Activated T-helper 1 cell treated with anti-CD3 and anti-CD28 coated beads, Interleukin-12 subunit alpha, Interleukin-12 subunit beta, Interleukin-2, Interleukin-4 antibody, amounts not matched to agents 30 ng/mL and 10 ng/mL and 1 ng/mL, durations not matched to agents 14 hours and 24 hours and 36 hours (primary cell): ENCODE measurements at regions of chr14 and their contacts with region 1.

Region 1: DNA sequence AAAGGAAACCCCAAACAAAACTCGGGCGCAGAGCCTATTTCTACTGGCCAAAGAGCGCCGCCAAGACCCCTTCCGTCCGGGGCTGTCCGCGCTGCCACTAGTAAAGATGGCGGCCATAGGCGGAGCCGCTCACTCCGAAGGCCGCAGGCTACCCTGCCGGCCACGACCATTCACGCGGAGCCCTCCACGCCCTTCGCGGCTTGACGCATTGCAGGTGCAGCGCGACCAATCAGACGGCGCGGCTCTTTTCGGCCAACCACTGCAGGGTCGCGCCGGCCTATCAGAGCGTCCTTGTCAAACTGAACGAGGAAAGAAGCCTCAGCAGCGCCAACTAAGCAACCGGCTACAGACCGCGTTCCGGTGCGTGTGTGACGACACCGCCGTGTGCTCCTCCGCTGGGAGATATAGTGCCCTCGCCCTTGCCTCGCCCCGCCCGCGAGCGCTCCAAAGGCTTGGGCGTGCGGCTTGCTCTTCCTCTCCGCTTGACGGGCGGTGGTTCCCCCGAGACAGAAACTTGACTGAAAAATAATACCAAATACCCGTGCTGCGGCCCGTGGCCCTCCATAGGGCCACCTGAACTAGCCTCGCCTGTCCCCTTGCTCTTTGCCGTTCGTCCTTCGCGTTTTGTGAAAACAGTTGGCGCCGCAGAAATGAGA is 13.6 kb upstream of the CALM1 start:
- DNase-seq: peak; percentile 98
- H3K4me3 Mint-ChIP-seq: no peak overlapping the region
- H3K27ac Mint-ChIP-seq: no peak overlapping the region
- H3K4me1 Mint-ChIP-seq: peaks cover 6% of the 10 kb centered on the region
- H3K27me3 Mint-ChIP-seq: peaks cover 1% of the 10 kb centered on the region

Region 2: GRCh38 chr14:89701211-89702043 is 681.8 kb before region 1 on chr14:
- intact Hi-C with region 1: loop called (anchors 5 kb)
- DNase-seq: peak; percentile 78
- H3K4me3 Mint-ChIP-seq: peak overlapping the region; percentile 70
- H3K27ac Mint-ChIP-seq: peak overlapping the region; percentile 84
- H3K4me1 Mint-ChIP-seq: peaks cover 51% of the 10 kb centered on the region
- H3K27me3 Mint-ChIP-seq: peaks cover 4% of the 10 kb centered on the region

Region 3: GRCh38 chr14:90239139-90239538 is 144.1 kb before region 1 on chr14:
- intact Hi-C with region 1: no loop called
- DNase-seq: no peak
- H3K4me3 Mint-ChIP-seq: no peak overlapping the region
- H3K27ac Mint-ChIP-seq: no peak overlapping the region
- H3K4me1 Mint-ChIP-seq: no peaks in the 10 kb centered on the region
- H3K27me3 Mint-ChIP-seq: peaks cover 2% of the 10 kb centered on the region

Region 4: GRCh38 chr14:90256354-90257131 is 126.7 kb before region 1 on chr14 and contains the start of gene PSMC1:
- intact Hi-C with region 1: loop called (anchors 5 kb)
- DNase-seq: peak; percentile 83
- H3K4me3 Mint-ChIP-seq: peak within 1 kb of the TSS; percentile 99
- H3K27ac Mint-ChIP-seq: peak within 1 kb of the TSS; percentile 93
- H3K4me1 Mint-ChIP-seq: peaks cover 22% of the 10 kb centered on the region
- H3K27me3 Mint-ChIP-seq: peaks cover 6% of the 10 kb centered on the region
- total RNA-seq, gene PSMC1: 171 and 176 TPM in 2 replicates

Region 5: DNA sequence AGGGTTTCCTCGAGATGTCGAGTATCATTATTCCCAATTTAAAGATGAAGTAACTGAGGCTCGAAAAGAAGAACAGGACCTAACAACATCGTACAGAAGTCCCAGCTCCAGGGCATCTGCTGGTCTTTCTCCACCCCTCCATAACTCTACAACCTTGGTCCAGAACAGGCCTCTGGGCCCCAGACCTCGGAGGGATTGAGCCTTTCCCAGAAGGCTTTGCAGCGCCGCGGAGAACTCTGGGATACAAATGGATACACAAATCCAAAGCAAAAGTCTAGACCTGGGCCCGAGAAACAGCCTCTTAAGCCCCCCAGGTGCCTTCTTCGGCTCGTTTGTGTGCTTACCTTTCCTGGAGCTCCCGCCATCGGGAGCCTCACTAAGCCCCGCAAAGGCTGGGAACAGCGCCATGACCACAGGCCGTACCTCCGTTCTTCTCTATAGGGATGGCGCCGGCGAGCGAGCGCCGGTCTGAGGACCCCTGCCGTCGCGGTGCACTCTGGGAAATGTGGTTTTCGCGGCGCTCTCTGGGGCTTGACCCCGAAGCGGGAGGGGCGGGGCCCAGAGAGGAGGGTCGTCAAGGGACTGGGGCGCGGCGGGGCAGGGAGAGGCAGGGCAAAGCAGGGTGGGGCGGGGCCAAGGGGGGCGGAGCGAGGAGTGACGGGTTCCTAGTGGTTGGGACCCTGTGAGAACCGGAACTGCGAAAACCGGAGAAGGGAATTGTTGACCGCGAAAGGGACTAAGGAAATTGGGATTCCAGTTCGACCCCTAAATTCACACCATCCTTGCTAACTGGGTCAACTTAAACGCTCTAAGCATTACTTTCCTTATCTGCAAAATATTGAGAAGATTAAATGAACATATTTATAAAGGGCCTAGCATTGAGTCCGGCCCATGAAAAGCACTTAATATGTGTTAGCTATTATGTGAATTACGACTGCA is 51.4 kb before region 1 on chr14 and contains the start of gene NRDE2:
- intact Hi-C with region 1: loop called (anchors 1 kb)
- DNase-seq: peak; percentile 90
- H3K4me3 Mint-ChIP-seq: peak within 1 kb of the TSS; percentile 93
- H3K27ac Mint-ChIP-seq: peak within 1 kb of the TSS; percentile 88
- H3K4me1 Mint-ChIP-seq: peaks cover 26% of the 10 kb centered on the region
- H3K27me3 Mint-ChIP-seq: peaks cover 24% of the 10 kb centered on the region
- total RNA-seq, gene NRDE2: 22.9 and 24.4 TPM in 2 replicates

Region 6: DNA sequence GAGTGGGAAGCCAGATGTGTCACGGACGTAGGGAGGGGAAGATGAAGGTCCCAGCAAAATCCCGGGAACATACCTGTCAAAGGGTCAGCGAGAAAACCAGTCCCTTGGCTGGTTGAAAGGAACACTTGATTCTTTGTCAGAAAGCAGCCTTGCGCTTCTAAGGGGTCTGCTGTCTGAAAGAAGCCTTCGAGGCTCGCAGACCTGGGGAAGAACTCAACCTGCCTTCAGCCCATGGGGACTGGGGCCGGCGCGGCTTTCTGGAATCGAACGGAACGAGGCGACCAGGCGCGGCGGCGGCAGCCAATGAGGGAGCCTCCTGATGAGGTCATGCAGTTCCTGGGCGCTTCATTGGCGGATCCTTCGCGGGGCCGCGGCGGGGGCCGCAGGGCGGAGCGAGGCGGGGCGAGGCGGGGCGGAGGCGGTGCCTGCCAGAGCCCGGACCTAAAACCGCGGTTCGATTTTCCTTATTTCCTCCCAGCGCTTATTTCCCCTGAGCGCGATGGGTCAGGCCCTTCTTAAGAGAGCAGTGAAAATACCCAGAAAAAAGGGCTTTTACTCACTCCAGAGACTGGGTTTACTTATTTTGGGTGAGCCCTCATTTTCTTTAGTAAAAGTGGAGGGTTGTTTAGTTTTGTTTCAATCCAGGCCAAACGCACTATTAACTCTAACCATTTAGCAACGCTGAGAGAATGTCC is 444.9 kb after region 1 on chr14:
- intact Hi-C with region 1: loop called (anchors 5 kb)
- DNase-seq: peak; percentile 91
- H3K4me3 Mint-ChIP-seq: peak overlapping the region; percentile 76
- H3K27ac Mint-ChIP-seq: peak overlapping the region; percentile 88
- H3K4me1 Mint-ChIP-seq: peaks cover 28% of the 10 kb centered on the region
- H3K27me3 Mint-ChIP-seq: peaks cover 5% of the 10 kb centered on the region

Region 7: DNA sequence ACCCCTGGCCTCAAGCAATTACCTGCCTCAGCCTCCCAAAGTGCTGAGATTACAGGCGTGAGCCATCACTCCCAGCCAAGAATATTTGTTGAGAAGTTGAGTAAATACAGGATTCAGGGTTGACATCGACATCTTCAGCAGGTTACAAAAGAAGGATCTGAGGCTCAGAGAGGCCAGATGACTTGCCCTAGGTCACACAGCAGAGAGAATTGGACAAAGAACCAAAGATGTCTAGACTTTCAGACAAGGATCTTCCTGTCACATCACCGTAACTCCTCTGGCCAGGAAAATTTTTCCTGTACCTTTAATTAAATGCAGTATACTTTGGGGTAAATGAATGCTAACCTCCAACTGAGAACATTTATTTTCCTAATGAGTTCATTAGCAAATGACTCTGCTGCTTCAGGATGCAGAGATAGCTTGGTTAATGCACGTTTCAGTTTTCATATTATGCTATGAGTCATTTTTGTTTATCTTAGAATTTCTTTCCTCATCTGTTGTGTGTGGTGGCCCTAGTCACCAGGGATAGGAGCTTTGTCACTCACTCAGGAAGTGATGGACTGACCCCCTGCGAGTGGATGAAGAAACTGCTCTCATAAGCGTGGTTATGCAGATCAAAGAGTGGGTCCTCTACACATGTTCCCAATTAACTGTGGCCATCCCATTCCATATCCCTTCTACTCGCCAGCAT is 1475.2 kb after region 1 on chr14:
- intact Hi-C with region 1: loop called (anchors 5 kb)
- DNase-seq: no peak
- H3K4me3 Mint-ChIP-seq: peak overlapping the region; percentile 10
- H3K27ac Mint-ChIP-seq: peak overlapping the region; percentile 65
- H3K4me1 Mint-ChIP-seq: peaks cover 77% of the 10 kb centered on the region
- H3K27me3 Mint-ChIP-seq: no peaks in the 10 kb centered on the region